Naive thymus-derived CD4-positive, alpha-beta T cell (primary cell): ENCODE measurements at regions of chr12 and their contacts with region 1.

Region 1: GRCh38 chr12:40107098-40107802 is 1.4 kb upstream of the SLC2A13 start:
- DNase-seq: peak; percentile 71 to 89 (median 81)
- ATAC-seq: peak; percentile 69
- H3K4me3 ChIP-seq: peak overlapping the region; percentile 50
- H3K4me3 Mint-ChIP-seq: peak overlapping the region; percentile 80 to 94 (median 90)
- H3K27ac ChIP-seq: peak overlapping the region; percentile 4
- H3K27ac Mint-ChIP-seq: peak overlapping the region in 8 of 9 donors; percentile 58 to 88 (median 74)
- H3K4me1 ChIP-seq: peaks cover 10 to 16% of the 10 kb centered on the region in 2 donors
- H3K4me1 Mint-ChIP-seq: peaks cover 20 to 38% (median 31%) of the 10 kb centered on the region in 7 donors
- H3K27me3 ChIP-seq: no peaks in the 10 kb centered on the region
- H3K27me3 Mint-ChIP-seq: peaks cover 0 to 35% (median 2%) of the 10 kb centered on the region in 5 donors

Region 2: DNA sequence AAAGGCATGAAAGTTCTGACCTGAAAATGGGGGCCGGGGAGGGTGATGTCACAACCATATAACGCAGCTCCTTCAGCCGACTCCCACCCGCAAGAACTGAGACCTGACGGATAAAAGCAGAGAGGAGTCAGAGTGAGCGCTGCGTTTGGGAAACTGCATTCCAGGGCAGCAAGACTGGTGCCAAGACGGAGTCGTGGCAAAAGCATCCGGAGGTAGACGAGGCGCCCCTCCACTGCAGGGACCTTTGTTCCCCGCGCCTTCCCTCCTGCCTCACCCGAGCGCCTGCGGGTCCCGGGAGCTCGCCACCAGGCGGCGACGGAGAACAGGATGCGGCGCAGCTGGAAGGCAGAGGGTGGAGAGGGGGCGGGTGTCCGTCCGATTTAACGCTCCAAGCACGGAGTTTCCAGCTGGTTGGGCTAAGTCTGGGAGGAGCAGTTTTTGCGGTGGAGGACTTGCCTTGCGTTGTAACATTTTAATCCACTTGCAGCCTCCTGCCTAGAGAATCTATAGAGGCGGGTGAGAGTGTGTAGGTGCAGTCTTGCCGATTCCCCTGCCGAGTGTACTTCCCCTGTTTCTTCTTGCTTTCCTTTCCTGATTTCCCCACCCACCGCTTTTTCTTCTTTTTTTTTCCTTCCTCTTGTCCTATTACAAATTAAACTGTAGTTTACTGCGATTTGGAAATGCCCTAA is 1200.6 kb before region 1 on chr12:
- CTCF ChIA-PET with region 1: no interaction called
- POLR2A ChIA-PET with region 1: no interaction called
- intact Hi-C with region 1: loop called in 1 of 2 experiments (anchors 5 kb)
- DNase-seq: peak; percentile 25 to 83 (median 49)
- ATAC-seq: peak; percentile 77
- H3K4me3 ChIP-seq: peak overlapping the region; percentile 76
- H3K4me3 Mint-ChIP-seq: peak overlapping the region; percentile 86 to 97 (median 92)
- H3K27ac ChIP-seq: no peak overlapping the region
- H3K27ac Mint-ChIP-seq: peak overlapping the region in 6 of 9 donors; percentile 38 to 95 (median 56)
- H3K4me1 ChIP-seq: no peaks in the 10 kb centered on the region
- H3K4me1 Mint-ChIP-seq: peaks cover 17 to 36% (median 25%) of the 10 kb centered on the region in 7 donors
- H3K27me3 ChIP-seq: no peaks in the 10 kb centered on the region
- H3K27me3 Mint-ChIP-seq: peaks cover 6 to 27% (median 21%) of the 10 kb centered on the region in 5 donors

Region 3: GRCh38 chr12:39443081-39443928 is 663.9 kb before region 1 on chr12 and contains the start of gene KIF21A:
- CTCF ChIA-PET with region 1: no interaction called
- POLR2A ChIA-PET with region 1: no interaction called
- intact Hi-C with region 1: loop called (anchors 1 to 2 kb)
- DNase-seq: peak; percentile 71 to 91 (median 82)
- ATAC-seq: peak; percentile 93
- H3K4me3 ChIP-seq: peak within 1 kb of the TSS; percentile 75
- H3K4me3 Mint-ChIP-seq: peak within 1 kb of the TSS; percentile 86 to 98 (median 92)
- H3K27ac ChIP-seq: peak within 1 kb of the TSS; percentile 66
- H3K27ac Mint-ChIP-seq: peak within 1 kb of the TSS; percentile 79 to 97 (median 89)
- H3K4me1 ChIP-seq: peaks cover 9 to 10% of the 10 kb centered on the region in 2 donors
- H3K4me1 Mint-ChIP-seq: peaks cover 10 to 28% (median 13%) of the 10 kb centered on the region in 7 donors
- H3K27me3 ChIP-seq: no peaks in the 10 kb centered on the region
- H3K27me3 Mint-ChIP-seq: peaks cover 0 to 32% (median 4%) of the 10 kb centered on the region in 5 donors
- total RNA-seq, gene KIF21A: 5.0 to 12.0 (median 9.3) TPM

Region 4: DNA sequence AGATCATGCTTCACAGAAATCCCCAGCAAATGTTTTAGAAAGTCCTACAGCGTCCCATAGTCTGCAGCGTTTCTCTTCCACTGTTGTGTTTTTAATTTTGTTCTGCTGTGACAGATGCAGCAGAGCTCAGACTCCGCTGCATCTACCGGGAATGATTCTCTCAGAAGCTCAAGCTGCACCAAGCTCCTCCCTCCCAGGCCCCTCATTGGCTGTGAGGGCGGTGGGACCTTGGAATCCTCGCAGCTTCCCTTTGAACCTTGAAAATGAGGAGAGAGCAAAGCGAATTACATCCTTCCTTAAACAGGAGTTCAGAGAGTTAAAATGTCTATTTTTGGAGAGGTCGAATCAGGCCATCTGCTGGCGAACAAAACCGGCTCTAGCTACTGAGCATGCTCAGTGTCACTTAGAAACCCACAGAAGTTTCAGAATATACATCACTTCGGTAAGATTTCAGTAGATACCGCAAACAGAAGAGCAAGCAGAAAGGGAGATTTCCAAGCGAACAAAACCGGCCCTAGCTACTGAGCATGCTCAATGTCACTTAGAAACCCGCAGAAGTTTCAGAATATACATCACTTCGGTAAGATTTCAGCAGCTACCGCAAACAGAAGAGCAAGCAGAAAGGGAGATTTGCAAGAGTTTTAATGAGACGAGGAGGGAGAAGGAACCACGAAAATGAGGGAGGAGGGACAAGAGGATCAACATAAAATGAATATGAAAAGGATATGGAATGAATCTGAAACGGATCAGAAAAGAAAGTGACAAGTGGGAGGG is 487.4 kb before region 1 on chr12 and contains the start of gene ABCD2:
- CTCF ChIA-PET with region 1: no interaction called
- POLR2A ChIA-PET with region 1: no interaction called
- intact Hi-C with region 1: loop called (anchors 1 to 2 kb)
- DNase-seq: peak; percentile 41 to 87 (median 83)
- ATAC-seq: peak; percentile 88
- H3K4me3 ChIP-seq: peak within 1 kb of the TSS; percentile 70
- H3K4me3 Mint-ChIP-seq: no peak within 1 kb of the TSS
- H3K27ac ChIP-seq: peak within 1 kb of the TSS; percentile 91
- H3K27ac Mint-ChIP-seq: no peak within 1 kb of the TSS
- H3K4me1 ChIP-seq: peaks cover 27 to 32% of the 10 kb centered on the region in 2 donors
- H3K4me1 Mint-ChIP-seq: peaks cover 16 to 57% (median 42%) of the 10 kb centered on the region in 7 donors
- H3K27me3 ChIP-seq: no peaks in the 10 kb centered on the region
- H3K27me3 Mint-ChIP-seq: no peaks in the 10 kb centered on the region
- total RNA-seq, gene ABCD2: 7.7 to 32.9 (median 21.0) TPM

Region 5: GRCh38 chr12:39764944-39765560 is 342.2 kb before region 1 on chr12:
- CTCF ChIA-PET with region 1: no interaction called
- POLR2A ChIA-PET with region 1: no interaction called
- intact Hi-C with region 1: loop called in 1 of 2 experiments (anchors 1 kb)
- DNase-seq: peak in 4 of 9 donors; percentile 2 to 22 (median 8)
- ATAC-seq: peak; percentile 51
- H3K4me3 ChIP-seq: no peak overlapping the region
- H3K4me3 Mint-ChIP-seq: no peak overlapping the region
- H3K27ac ChIP-seq: no peak overlapping the region
- H3K27ac Mint-ChIP-seq: no peak overlapping the region
- H3K4me1 ChIP-seq: no peaks in the 10 kb centered on the region
- H3K4me1 Mint-ChIP-seq: no peaks in the 10 kb centered on the region
- H3K27me3 ChIP-seq: no peaks in the 10 kb centered on the region
- H3K27me3 Mint-ChIP-seq: no peaks in the 10 kb centered on the region

Region 6: GRCh38 chr12:40137252-40137651 is 30.0 kb after region 1 on chr12:
- CTCF ChIA-PET with region 1: no interaction called
- POLR2A ChIA-PET with region 1: no interaction called
- intact Hi-C with region 1: loop called (anchors 2 kb)
- DNase-seq: peak in 3 of 9 donors; percentile 13 to 19 (median 14)
- ATAC-seq: peak; percentile 76
- H3K4me3 ChIP-seq: no peak overlapping the region
- H3K4me3 Mint-ChIP-seq: peak overlapping the region in 1 of 10 donors; percentile 28
- H3K27ac ChIP-seq: no peak overlapping the region
- H3K27ac Mint-ChIP-seq: no peak overlapping the region
- H3K4me1 ChIP-seq: no peaks in the 10 kb centered on the region
- H3K4me1 Mint-ChIP-seq: peaks cover 0 to 13% (median 0%) of the 10 kb centered on the region in 7 donors
- H3K27me3 ChIP-seq: no peaks in the 10 kb centered on the region
- H3K27me3 Mint-ChIP-seq: peaks cover 0 to 7% (median 5%) of the 10 kb centered on the region in 5 donors